Activated CD4-positive, alpha-beta T cell treated with anti-CD3 and anti-CD28 coated beads for 36 hours (primary cell): ENCODE measurements at regions of chr10 and their contacts with region 1.

Region 1: DNA sequence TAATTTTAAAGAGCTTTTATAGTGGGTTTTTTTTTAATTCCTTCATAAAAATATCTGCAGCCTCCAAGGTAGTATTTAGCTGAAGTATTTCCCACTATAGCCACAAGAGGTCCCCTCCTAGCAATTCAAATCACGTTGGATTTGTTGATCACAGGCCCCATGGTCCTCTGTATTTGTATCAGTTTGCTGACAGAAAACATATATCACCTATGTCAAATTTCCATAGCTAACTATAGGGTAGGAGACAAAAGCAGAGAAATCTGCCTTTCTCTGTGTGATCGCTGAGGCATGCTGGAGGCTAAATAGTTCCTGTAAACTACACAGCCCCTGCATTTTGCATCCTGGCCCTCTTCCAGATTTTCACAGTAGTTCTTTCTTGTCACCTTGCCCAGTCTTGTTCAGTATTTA is 1.7 kb upstream of the CTNNA3 start:
- DNase-seq: peak; percentile 19
- ATAC-seq: peak; percentile 73
- H3K4me3 Mint-ChIP-seq: no peak overlapping the region
- H3K27ac Mint-ChIP-seq: no peak overlapping the region
- H3K4me1 Mint-ChIP-seq: peaks cover 10% of the 10 kb centered on the region
- H3K27me3 Mint-ChIP-seq: peaks cover 24% of the 10 kb centered on the region

Region 2: GRCh38 chr10:67666416-67667034 is 31.2 kb before region 1 on chr10:
- CTCF ChIA-PET with region 1: interaction called, 17 read pairs
- POLR2A ChIA-PET with region 1: no interaction called
- intact Hi-C with region 1: no loop called
- DNase-seq: no peak
- ATAC-seq: no peak
- H3K4me3 Mint-ChIP-seq: no peak overlapping the region
- H3K27ac Mint-ChIP-seq: no peak overlapping the region
- H3K4me1 Mint-ChIP-seq: no peaks in the 10 kb centered on the region
- H3K27me3 Mint-ChIP-seq: no peaks in the 10 kb centered on the region

Region 3: DNA sequence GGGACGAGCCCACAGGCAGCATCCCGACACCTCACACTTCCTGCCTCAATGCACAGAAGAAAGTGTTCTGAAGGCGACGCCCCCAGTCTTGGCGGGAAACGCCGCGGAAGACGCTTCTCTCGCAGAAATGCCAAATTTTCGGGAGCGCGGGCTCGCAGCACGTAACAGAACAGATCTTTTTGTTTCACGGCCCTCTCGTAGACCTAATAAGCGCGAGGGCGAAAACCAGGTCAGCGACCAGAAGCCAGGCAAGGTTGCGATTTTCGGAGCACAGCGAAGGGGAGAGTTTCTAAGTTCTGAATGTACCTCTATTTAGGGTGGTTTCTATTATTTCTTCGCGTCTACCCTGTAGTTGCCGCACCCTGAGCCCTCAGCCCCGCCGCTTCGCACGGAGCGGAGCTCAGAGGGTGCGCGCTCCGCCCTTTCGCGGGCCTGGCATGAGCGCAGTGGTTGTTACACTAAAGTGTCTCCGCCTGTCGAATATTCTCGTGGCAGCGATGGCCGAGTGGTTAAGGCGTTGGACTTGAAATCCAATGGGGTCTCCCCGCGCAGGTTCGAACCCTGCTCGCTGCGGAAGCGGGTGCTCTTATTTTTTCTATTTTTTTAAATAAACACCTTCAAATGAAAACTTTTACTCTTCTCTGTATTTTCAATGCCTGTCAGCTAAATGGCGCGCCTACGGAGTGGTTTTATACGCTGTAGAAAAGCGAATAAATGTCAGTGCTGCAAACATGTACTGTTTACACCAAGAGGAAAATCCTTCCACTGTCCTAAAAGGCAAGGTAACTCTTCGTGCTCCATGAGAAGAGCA is 66.5 kb after region 1 on chr10:
- CTCF ChIA-PET with region 1: interaction called, 14 read pairs
- POLR2A ChIA-PET with region 1: no interaction called
- intact Hi-C with region 1: no loop called
- DNase-seq: peak; percentile 96
- ATAC-seq: peak; percentile 86
- H3K4me3 Mint-ChIP-seq: peak overlapping the region; percentile 86
- H3K27ac Mint-ChIP-seq: peak overlapping the region; percentile 99
- H3K4me1 Mint-ChIP-seq: peaks cover 15% of the 10 kb centered on the region
- H3K27me3 Mint-ChIP-seq: peaks cover 2% of the 10 kb centered on the region

Region 4: DNA sequence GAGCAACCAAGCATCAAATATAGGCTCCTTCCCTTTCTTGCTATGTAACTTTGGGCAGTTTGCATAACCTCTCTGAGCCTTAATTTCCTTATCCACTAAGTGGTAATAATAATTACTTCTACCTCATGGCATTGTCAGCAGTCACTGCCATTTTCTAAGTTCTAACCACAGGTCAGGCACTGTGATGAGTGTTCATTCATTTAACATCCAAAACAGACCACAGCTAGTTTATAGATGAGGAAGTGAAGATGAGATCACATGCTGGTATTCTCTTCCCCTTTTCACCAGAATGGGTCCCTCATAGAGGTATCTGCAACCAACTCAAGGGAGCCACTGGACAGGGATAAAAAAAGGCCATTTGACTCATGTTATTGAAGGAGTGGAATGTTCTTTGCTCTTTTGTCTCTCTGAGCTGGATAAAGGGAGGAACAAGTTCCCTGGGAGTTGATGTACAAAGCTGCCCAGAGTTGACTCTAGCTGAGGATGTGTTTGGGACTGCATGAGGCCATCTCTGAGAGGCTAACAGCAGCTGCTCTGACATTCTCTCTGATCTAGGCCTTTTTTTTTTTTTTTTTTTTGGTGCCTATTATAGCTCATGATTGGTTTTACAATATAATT is 75.3 kb after region 1 on chr10:
- CTCF ChIA-PET with region 1: interaction called, 184 read pairs
- POLR2A ChIA-PET with region 1: interaction called, 3 read pairs
- intact Hi-C with region 1: no loop called
- DNase-seq: no peak
- ATAC-seq: peak; percentile 88
- H3K4me3 Mint-ChIP-seq: no peak overlapping the region
- H3K27ac Mint-ChIP-seq: no peak overlapping the region
- H3K4me1 Mint-ChIP-seq: peaks cover 7% of the 10 kb centered on the region
- H3K27me3 Mint-ChIP-seq: no peaks in the 10 kb centered on the region

Region 5: GRCh38 chr10:67779465-67780203 is 81.9 kb after region 1 on chr10:
- CTCF ChIA-PET with region 1: interaction called, 184 read pairs
- POLR2A ChIA-PET with region 1: no interaction called
- intact Hi-C with region 1: loop called (anchors 1 kb)
- DNase-seq: peak; percentile 78
- ATAC-seq: peak; percentile 76
- H3K4me3 Mint-ChIP-seq: no peak overlapping the region
- H3K27ac Mint-ChIP-seq: peak overlapping the region; percentile 49
- H3K4me1 Mint-ChIP-seq: peaks cover 19% of the 10 kb centered on the region
- H3K27me3 Mint-ChIP-seq: no peaks in the 10 kb centered on the region

Region 6: DNA sequence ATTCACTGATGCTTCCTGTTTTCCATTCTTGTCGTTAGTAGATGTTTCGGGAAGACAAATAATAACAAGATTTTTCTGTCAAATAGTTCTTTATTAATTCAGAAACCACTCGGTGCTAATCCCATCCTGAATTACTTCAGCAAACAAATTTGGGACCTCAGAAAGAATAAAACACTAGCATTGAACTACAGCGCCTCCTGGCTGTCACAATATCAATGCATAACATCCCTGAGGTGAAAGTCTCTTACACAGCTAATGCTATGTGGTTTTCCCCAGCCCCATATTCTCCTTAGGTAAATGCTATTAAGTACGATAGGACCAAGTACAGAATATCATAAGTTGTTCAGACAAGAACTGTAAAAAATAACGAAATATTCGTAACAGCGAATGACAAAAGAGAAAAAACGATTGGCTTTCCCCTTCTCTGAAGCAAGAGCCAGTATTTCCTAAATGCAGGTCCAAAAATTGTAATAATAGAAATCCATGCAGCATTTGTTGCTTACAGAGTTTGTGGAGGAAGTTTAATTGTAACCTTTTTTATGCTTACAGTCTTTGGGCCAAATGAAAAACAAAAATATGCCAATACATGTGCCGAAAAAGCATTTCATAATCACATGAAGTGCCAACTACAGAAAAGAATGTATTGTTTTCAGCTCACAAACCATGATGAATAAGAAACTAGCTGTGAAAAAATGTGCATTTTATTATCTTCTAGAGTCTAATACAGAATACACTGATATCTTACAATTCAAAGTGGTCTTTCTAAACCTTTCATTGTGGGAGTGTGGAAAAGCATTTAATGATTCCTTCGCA is 458.9 kb after region 1 on chr10:
- CTCF ChIA-PET with region 1: interaction called, 3 read pairs
- POLR2A ChIA-PET with region 1: no interaction called
- intact Hi-C with region 1: loop called in 1 of 2 experiments (anchors 5 kb)
- DNase-seq: peak; percentile 76
- ATAC-seq: peak; percentile 67
- H3K4me3 Mint-ChIP-seq: no peak overlapping the region
- H3K27ac Mint-ChIP-seq: no peak overlapping the region
- H3K4me1 Mint-ChIP-seq: peaks cover 2% of the 10 kb centered on the region
- H3K27me3 Mint-ChIP-seq: peaks cover 1% of the 10 kb centered on the region

Region 7: GRCh38 chr10:68301790-68302502 is 604.2 kb after region 1 on chr10:
- CTCF ChIA-PET with region 1: no interaction called
- POLR2A ChIA-PET with region 1: no interaction called
- intact Hi-C with region 1: loop called in 1 of 2 experiments (anchors 10 kb)
- DNase-seq: no peak
- ATAC-seq: peak; percentile 55
- H3K4me3 Mint-ChIP-seq: no peak overlapping the region
- H3K27ac Mint-ChIP-seq: no peak overlapping the region
- H3K4me1 Mint-ChIP-seq: no peaks in the 10 kb centered on the region
- H3K27me3 Mint-ChIP-seq: no peaks in the 10 kb centered on the region